Left cardiac atrium (tissue), 4 donors: ENCODE measurements at regions of chr21 and their contacts with region 1.

Region 1: DNA sequence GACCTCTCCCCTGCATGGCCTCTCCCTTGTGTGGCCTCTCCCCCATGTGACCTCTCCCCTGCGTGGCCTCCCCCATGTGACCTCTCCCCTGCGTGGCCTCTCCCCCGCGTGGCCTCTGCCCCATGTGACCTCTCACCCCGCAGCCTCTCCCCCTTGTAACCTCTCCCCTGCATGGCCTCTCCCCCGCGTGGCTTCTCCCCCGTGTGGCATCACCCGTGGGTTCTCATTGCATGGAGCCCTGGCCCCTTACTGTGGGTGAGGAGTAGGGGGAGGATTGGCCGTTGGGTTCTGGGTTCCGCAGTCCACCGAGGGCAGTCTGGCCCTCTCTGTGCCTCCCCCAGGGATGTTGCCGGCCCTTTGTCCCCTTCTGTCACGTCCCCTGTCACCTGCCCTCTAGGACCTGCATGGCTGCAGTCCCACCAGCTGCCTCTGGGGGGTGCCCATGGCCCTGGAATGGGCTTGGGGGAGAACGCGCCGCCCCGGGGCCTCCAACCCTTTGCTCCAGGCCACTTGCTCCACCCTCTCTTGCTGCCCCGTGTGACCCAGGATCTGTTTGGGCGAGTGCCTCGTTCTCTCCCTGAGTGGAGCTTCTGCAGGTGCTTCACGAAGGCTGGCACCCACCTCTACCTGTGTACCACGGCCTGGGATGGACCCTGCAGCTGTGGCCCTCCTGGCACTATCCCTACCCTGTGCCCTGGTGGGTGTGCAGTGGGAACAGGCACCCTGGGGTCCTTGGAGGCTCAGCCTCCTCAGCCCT is 21.3 kb downstream of the RRP1 start:
- DNase-seq: peak; percentile 86
- ATAC-seq: peak; percentile 71 to 75

Region 2: GRCh38 chr21:43959231-43960116 is 148.8 kb after region 1 on chr21:
- intact Hi-C with region 1: loop called in 1 of 2 experiments (anchors 10 kb)
- DNase-seq: no peak
- ATAC-seq: no peak